HepG2 (cell line): ENCODE measurements at regions of chr22 and their contacts with region 1.

Region 1: DNA sequence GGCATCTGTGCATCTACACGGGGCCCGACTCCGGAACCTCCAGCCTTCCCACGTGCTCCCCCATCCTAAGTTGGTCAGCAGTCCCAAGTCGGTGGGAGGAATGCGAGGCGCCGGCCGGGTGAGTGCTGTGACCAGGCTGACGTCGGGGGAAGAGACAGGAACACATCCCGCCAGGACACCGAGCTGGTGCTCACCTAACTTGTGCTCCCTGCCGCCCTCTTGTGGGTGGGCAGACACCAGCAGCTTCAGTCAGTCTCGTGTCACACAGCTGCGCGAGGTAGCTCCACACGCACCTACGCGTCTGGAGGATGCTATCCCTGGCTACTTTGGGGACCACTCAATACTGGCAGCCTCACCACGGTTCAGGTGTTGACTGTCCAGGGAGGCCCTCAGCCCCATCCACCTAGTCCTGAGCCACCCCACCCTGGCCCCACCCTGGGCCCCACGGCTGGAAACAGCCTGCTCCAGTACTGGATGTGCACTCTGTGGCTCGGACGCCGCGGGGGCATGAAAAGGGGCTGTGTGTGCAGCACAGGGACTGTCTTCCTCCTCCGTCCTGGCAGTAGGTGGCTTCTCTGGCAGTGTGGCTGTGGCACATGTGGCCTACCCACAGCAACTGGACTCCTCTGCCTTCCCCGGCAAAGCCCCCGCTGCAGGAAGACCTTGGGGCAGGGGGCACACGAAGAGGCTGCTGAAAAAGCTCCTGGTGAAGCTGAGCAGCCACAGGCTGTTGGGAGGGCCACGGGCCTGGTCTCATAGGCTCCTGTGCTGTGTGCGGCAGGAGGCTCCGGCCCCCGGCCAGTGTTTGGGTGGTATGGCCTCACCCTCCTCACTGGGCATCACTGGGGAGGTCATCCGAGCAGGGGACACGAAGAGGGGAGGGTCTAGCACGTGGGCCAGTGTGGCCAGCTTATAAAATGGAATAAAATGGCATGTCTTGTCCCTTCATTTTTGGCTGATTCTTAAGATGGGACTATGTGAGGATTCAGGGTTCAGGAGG is 11.2 kb upstream of the BID start:
- DNase-seq: peak; percentile 72
- ATAC-seq: peak; percentile 63
- H3K4me3 ChIP-seq: peak overlapping the region in 1 of 3 experiments; percentile 30; a peak in 1 of 6 replicates
- H3K27ac ChIP-seq: no peak overlapping the region
- H3K4me1 ChIP-seq: peaks cover 58% of the 10 kb centered on the region
- H3K27me3 ChIP-seq: no peaks in the 10 kb centered on the region
- CTCF ChIP-seq: peak; percentile 94
- EP300 ChIP-seq: no peak
- POLR2A ChIP-seq: no peak
- RAD21 ChIP-seq: peak; percentile 84; the same call in 1 of the 2 replicates

Region 2: DNA sequence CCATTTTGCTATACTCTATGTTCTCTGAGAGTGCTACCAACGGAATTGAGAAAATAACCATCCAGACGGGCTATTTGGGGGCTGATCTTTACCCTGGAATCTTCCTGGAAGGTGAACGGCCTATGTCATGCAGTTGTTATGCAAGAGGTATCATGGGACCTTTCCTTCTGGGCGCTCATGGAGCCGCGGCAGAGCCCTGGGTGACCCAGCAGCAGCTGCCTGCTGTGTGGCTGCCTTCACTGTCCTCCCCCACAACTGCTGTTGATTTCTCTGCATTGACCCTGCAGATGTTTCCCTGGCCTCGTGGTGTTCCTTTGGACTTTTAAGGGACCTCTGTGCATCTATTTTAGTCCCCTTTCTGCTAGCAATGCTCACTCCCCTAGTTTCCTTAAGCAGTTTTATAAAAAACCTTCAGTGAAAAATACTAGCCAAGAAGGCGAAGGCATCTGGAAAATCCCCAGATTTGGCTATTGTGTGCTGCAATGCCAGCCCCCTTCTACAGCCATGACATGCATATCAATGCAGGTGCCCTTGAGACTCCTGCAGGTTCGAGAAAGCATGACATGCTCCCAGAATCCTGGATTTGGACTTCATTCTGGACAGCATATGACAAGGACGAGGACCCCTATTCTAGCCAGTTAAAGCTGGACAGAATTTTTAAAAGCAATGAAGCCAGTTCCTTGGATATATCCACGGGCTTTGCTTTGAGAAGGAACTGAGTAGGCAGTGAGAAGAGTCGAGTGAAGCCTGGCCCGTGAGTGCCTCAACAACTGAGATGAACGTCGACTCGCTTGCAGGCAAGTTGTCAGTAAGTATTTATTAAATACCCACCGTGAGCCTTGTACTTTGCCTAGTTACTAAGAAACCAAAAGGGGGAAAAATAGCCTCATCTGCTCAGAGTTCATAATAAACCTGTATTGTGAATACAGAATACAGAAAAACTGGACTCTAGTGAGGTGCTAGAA is 222.3 kb before region 1 on chr22 and contains the start of gene SLC25A18:
- CTCF ChIA-PET with region 1: no interaction called
- POLR2A ChIA-PET with region 1: no interaction called
- in situ Hi-C with region 1: no loop called
- intact Hi-C with region 1: loop called (anchors 1 kb)
- DNase-seq: peak; percentile 53
- ATAC-seq: peak; percentile 81
- H3K4me3 ChIP-seq: peak within 1 kb of the TSS; percentile 27 to 52 (median 51); a peak in 5 of 6 replicates
- H3K27ac ChIP-seq: no peak within 1 kb of the TSS
- H3K4me1 ChIP-seq: peaks cover 29% of the 10 kb centered on the region
- H3K27me3 ChIP-seq: no peaks in the 10 kb centered on the region; a peak in 1 of 5 replicates
- CTCF ChIP-seq: no peak
- EP300 ChIP-seq: peak in 1 of 2 experiments; percentile 27; a peak in 1 of 4 replicates
- POLR2A ChIP-seq: no peak
- RAD21 ChIP-seq: no peak
- total RNA-seq, gene SLC25A18: 0.75 and 0.86 TPM in 2 replicates

Region 3: DNA sequence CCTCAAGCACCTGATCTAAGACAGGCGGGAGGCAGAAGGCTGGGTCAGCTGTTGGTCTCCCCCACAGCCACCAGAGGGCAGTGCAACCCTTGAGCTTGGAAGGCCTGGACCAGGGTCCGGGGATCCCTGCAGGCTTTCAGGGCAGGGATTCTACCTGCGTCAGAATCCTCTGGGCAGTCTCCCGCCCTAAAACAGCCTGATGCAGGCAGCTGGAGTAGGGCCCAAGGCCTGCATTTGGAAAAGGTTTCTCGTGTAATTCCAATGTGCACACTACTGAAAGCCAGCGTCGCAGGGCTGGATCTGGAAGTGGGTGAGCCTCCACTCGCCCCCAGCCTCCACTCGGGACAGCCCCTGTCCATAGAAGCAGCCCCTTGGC is 43.0 kb before region 1 on chr22:
- CTCF ChIA-PET with region 1: interaction called, 24 read pairs
- POLR2A ChIA-PET with region 1: interaction called, 7 read pairs
- in situ Hi-C with region 1: loop called (anchors 5 kb)
- intact Hi-C with region 1: loop called (anchors 1 kb)
- DNase-seq: peak; percentile 63
- ATAC-seq: peak; percentile 93
- H3K4me3 ChIP-seq: no peak overlapping the region
- H3K27ac ChIP-seq: no peak overlapping the region
- H3K4me1 ChIP-seq: no peaks in the 10 kb centered on the region
- H3K27me3 ChIP-seq: no peaks in the 10 kb centered on the region
- CTCF ChIP-seq: peak; percentile 90
- EP300 ChIP-seq: no peak
- POLR2A ChIP-seq: no peak
- RAD21 ChIP-seq: peak; percentile 91

Region 4: GRCh38 chr22:17754233-17754925 is 31.1 kb before region 1 on chr22:
- CTCF ChIA-PET with region 1: interaction called, 9 read pairs
- POLR2A ChIA-PET with region 1: interaction called, 12 read pairs
- in situ Hi-C with region 1: no loop called
- intact Hi-C with region 1: loop called (anchors 2 kb)
- DNase-seq: no peak
- ATAC-seq: peak; percentile 82
- H3K4me3 ChIP-seq: no peak overlapping the region
- H3K27ac ChIP-seq: no peak overlapping the region
- H3K4me1 ChIP-seq: no peaks in the 10 kb centered on the region
- H3K27me3 ChIP-seq: no peaks in the 10 kb centered on the region; a peak in 1 of 5 replicates
- CTCF ChIP-seq: peak; percentile 73
- EP300 ChIP-seq: no peak
- POLR2A ChIP-seq: no peak
- RAD21 ChIP-seq: peak; percentile 81

Region 5: DNA sequence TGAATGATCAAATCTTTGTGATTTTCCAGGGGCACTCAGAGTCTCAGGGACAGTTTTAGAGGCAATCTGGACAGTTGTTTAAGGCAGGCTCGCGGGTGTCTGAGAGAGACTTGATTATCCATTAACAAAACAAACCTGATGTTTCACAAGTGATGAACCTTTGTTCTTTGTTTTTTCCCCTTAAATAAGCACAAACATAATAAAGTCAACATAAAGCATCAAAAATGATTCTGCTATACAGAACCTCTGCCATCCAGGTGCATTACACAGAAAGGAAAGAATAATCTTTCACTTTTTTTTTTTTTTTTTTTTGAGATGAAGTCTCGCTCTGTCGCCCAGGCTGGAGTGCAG is 24.4 kb before region 1 on chr22:
- CTCF ChIA-PET with region 1: no interaction called
- POLR2A ChIA-PET with region 1: interaction called, 12 read pairs
- in situ Hi-C with region 1: no loop called
- intact Hi-C with region 1: loop called (anchors 2 kb)
- DNase-seq: peak; percentile 73
- ATAC-seq: peak; percentile 86
- H3K4me3 ChIP-seq: peak overlapping the region; percentile 23 to 46 (median 32); a peak in 5 of 6 replicates
- H3K27ac ChIP-seq: peak overlapping the region; percentile 79
- H3K4me1 ChIP-seq: peaks cover 48% of the 10 kb centered on the region
- H3K27me3 ChIP-seq: no peaks in the 10 kb centered on the region
- CTCF ChIP-seq: no peak
- EP300 ChIP-seq: peak in 1 of 2 experiments; percentile 51; a peak in 2 of 4 replicates
- POLR2A ChIP-seq: no peak
- RAD21 ChIP-seq: no peak

Region 6: DNA sequence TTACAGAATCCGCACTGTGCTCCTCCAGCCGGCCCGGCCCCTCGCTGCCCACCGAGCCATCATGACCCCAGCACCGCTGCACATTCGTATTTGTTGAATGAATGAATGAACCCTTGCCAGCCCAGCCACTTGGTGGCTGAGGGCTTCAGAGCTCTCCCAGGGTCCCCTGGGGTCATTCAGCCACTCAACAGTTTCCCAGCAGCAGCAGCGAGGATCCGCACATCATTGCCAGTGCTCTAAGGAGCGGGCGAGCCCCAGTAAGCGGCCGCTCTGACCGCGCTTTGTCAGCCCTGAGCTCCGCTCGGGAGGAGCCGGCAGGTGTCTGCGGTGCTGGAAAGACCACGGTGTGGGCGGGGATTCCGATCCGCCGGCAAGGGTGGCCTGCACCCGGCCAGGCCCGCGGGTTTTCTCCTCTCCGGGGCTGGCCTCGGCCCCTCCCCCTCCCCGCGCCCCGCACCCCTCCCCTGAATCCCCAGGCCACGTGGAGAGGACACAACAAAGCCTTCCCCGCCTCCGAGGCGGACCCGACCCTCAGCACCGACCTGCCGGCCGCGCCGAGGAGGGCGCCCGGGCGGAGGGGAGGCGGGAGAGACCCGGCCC is 11.8 kb before region 1 on chr22:
- CTCF ChIA-PET with region 1: no interaction called
- POLR2A ChIA-PET with region 1: interaction called, 24 read pairs
- in situ Hi-C with region 1: no loop called
- intact Hi-C with region 1: no loop called
- DNase-seq: peak; percentile 35
- ATAC-seq: peak; percentile 79
- H3K4me3 ChIP-seq: peak overlapping the region; percentile 63 to 89 (median 83)
- H3K27ac ChIP-seq: peak overlapping the region; percentile 62
- H3K4me1 ChIP-seq: peaks cover 61% of the 10 kb centered on the region
- H3K27me3 ChIP-seq: no peaks in the 10 kb centered on the region; a peak in 1 of 5 replicates
- CTCF ChIP-seq: no peak
- EP300 ChIP-seq: no peak
- POLR2A ChIP-seq: peak; percentile 36 to 57; a peak in 3 of 4 replicates
- RAD21 ChIP-seq: no peak

Region 7: GRCh38 chr22:17797721-17798559 is 12.5 kb after region 1 on chr22:
- CTCF ChIA-PET with region 1: no interaction called
- POLR2A ChIA-PET with region 1: interaction called, 15 read pairs
- in situ Hi-C with region 1: no loop called
- intact Hi-C with region 1: no loop called
- DNase-seq: no peak
- ATAC-seq: no peak
- H3K4me3 ChIP-seq: no peak overlapping the region
- H3K27ac ChIP-seq: no peak overlapping the region
- H3K4me1 ChIP-seq: peaks cover 20% of the 10 kb centered on the region
- H3K27me3 ChIP-seq: no peaks in the 10 kb centered on the region; a peak in 1 of 5 replicates
- CTCF ChIP-seq: no peak
- EP300 ChIP-seq: no peak
- POLR2A ChIP-seq: no peak
- RAD21 ChIP-seq: no peak

Region 8: DNA sequence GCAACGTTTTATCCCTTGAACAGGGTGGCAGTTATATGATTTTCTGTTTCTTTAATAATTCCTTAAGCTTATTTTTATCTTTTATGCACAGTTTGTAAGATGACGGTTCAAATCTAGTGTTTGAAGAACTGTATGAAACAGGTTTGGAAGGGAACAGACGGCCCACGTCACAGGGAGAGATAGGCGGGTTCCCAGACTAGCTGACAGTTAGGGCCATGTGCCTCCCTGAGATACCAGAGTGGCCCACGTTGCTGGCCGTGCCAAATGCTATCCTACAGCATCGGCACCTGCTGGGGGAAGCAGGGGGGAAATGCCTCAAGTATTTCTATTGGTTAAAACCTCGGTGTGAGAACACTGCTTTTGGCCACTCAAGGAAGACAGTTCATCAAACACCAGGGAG is 39.0 kb after region 1 on chr22:
- CTCF ChIA-PET with region 1: no interaction called
- POLR2A ChIA-PET with region 1: no interaction called
- in situ Hi-C with region 1: no loop called
- intact Hi-C with region 1: no loop called
- DNase-seq: no peak
- ATAC-seq: no peak
- H3K4me3 ChIP-seq: no peak overlapping the region
- H3K27ac ChIP-seq: no peak overlapping the region
- H3K4me1 ChIP-seq: no peaks in the 10 kb centered on the region
- H3K27me3 ChIP-seq: no peaks in the 10 kb centered on the region
- CTCF ChIP-seq: no peak
- EP300 ChIP-seq: no peak
- POLR2A ChIP-seq: no peak
- RAD21 ChIP-seq: no peak